ENCODE measurements at regions of chr5 and their contacts with region 1.

Region 1: GRCh38 chr5:74736759-74737158 is 30.2 kb downstream of the GFM2 start:
- DNase-seq: no peak
- ATAC-seq: no peak
- H3K4me3 ChIP-seq: no peak overlapping the region
- H3K27ac ChIP-seq: no peak overlapping the region
- H3K4me1 ChIP-seq: no peaks in the 10 kb centered on the region
- H3K27me3 ChIP-seq: no peaks in the 10 kb centered on the region
- CTCF ChIP-seq: no peak
- POLR2A ChIP-seq: no peak
- RAD21 ChIP-seq: no peak

Region 2: GRCh38 chr5:74766849-74767578 is 30.3 kb after region 1 on chr5 and contains the starts of genes GFM2 and NSA2:
- CTCF ChIA-PET with region 1: no interaction called
- POLR2A ChIA-PET with region 1: no interaction called
- dilution Hi-C with region 1: no loop called
- in situ Hi-C with region 1: no loop called
- intact Hi-C with region 1: no loop called
- DNase-seq: peak; percentile 94
- ATAC-seq: peak; percentile 94
- H3K4me3 ChIP-seq: peak within 1 kb of the TSS; percentile 82
- H3K27ac ChIP-seq: peak within 1 kb of the TSS; percentile 88
- H3K4me1 ChIP-seq: peaks cover 7% of the 10 kb centered on the region
- H3K27me3 ChIP-seq: no peaks in the 10 kb centered on the region
- CTCF ChIP-seq: no peak
- POLR2A ChIP-seq: peak; percentile 61
- RAD21 ChIP-seq: no peak
- total RNA-seq, gene GFM2: 45.7 and 61.4 TPM in 2 replicates
- total RNA-seq, gene NSA2: 5.4 and 25.6 TPM in 2 replicates

Region 3: DNA sequence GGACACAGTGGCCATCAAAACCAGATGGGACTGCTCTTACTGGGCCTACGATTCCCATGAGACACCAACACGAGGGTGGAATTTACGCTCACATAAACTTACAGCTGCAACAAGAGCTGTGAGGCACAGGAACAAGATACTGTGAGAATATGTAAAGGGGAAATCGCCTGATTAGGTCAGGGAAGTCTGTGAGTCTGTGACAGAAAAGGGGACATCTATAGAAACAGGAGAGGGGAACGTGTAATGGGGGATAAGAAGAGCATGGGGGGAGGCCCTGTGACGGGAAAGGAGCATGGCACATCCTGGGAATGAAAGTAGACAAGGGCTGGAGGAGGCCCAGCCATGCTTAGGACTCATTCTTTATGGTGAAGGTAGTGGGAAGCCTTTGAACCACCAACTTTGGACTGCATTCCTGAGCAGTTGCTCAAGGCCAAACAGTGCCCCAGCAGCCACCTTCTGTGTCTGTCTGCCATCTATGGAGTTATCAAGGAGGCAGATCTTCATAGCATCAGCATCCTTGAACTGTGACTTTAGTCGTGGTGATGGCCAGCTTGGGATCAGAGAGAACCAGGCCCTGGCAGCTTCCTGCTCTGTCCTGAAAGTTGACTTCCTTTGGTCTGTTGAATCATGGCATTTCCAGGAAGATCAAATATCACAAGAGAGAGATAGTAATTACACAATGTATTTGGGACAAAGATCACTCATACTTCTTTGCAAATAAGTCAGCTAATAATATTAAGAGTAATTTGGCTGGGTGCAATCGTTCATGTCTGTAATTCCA is 217.4 kb after region 1 on chr5:
- CTCF ChIA-PET with region 1: no interaction called
- POLR2A ChIA-PET with region 1: no interaction called
- dilution Hi-C with region 1: no loop called
- in situ Hi-C with region 1: no loop called
- intact Hi-C with region 1: no loop called
- DNase-seq: peak; percentile 77
- ATAC-seq: peak; percentile 48
- H3K4me3 ChIP-seq: no peak overlapping the region
- H3K27ac ChIP-seq: peak overlapping the region; percentile 95
- H3K4me1 ChIP-seq: peaks cover 23% of the 10 kb centered on the region
- H3K27me3 ChIP-seq: no peaks in the 10 kb centered on the region
- CTCF ChIP-seq: no peak
- POLR2A ChIP-seq: no peak
- RAD21 ChIP-seq: no peak

Region 4: GRCh38 chr5:75856056-75856455 is 1119.3 kb after region 1 on chr5:
- CTCF ChIA-PET with region 1: no interaction called
- POLR2A ChIA-PET with region 1: interaction called, 16 read pairs
- dilution Hi-C with region 1: no loop called
- in situ Hi-C with region 1: no loop called
- intact Hi-C with region 1: no loop called
- DNase-seq: no peak
- ATAC-seq: no peak
- H3K4me3 ChIP-seq: no peak overlapping the region
- H3K27ac ChIP-seq: no peak overlapping the region
- H3K4me1 ChIP-seq: no peaks in the 10 kb centered on the region
- H3K27me3 ChIP-seq: no peaks in the 10 kb centered on the region
- CTCF ChIP-seq: no peak
- POLR2A ChIP-seq: no peak
- RAD21 ChIP-seq: no peak